Esophagus muscularis mucosa (tissue), 4 donors: ENCODE measurements at regions of chr11 and their contacts with region 1.

Region 1: GRCh38 chr11:59207988-59208451 is 4.7 kb downstream of the MPEG1 start:
- DNase-seq: no peak
- H3K4me3 ChIP-seq: peak overlapping the region in 2 of 4 donors; percentile 6 to 36
- H3K27ac ChIP-seq: peak overlapping the region in 1 of 4 donors; percentile 40
- H3K4me1 ChIP-seq: peaks cover 0 to 18% (median 7%) of the 10 kb centered on the region in 4 donors
- H3K27me3 ChIP-seq: no peaks in the 10 kb centered on the region
- CTCF ChIP-seq: peak; percentile 66 to 74 (median 72)
- EP300 ChIP-seq: no peak
- POLR2A ChIP-seq: no peak

Region 2: DNA sequence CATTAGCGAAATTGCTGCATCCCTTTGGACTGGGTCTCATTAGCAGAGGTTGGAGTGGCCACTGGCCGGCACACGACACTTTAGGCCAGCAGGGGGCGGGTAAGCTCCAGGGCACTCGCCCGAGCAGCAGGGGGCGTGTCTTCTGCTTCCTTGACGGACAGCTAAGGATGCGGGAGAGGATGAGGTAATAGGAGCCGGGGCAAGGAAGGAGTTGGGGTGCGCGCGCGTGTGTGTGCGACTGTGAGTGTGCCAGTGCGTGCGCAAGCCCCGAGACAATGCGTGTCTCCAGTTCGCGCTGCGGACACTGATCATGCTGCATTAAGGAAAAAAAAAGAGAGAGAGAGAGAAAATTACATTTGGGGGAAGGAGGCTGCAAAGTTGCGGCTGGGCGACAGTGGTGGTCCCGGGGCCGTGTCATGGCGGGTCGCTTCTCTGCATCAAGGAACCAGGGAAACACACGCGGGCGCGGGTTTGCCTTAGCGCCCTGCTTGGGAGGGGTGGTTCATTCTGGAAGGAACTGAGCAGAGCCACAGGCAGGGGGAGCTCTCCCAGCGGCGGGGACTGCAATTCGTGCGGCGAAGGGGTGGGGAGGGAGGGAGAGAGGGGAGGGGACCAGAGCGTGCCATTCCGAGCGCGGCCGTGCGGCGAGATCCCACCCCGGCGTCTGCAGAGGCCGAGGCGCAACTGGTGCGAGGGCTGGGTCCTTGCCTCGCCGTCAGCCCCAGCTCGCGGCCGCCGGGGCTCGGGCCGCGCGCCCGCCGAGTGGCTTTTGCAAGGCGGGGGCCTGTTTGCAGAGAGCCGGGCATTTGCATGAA is 36.3 kb before region 1 on chr11 and contains the start of gene DTX4:
- intact Hi-C with region 1: loop called (anchors 1 kb)
- DNase-seq: peak; percentile 97
- H3K4me3 ChIP-seq: peak within 1 kb of the TSS; percentile 64 to 87 (median 74)
- H3K27ac ChIP-seq: peak within 1 kb of the TSS; percentile 51 to 74 (median 70)
- H3K4me1 ChIP-seq: peaks cover 9 to 38% (median 25%) of the 10 kb centered on the region in 4 donors
- H3K27me3 ChIP-seq: peaks cover 0 to 10% (median 5%) of the 10 kb centered on the region in 4 donors
- CTCF ChIP-seq: peak; percentile 72 to 94 (median 88)
- EP300 ChIP-seq: no peak
- POLR2A ChIP-seq: no peak
- total RNA-seq, gene DTX4: 3.1 to 8.8 (median 4.5) TPM

Region 3: GRCh38 chr11:59283825-59284772 is 76.1 kb after region 1 on chr11:
- intact Hi-C with region 1: loop called (anchors 5 kb)
- DNase-seq: peak; percentile 91
- H3K4me3 ChIP-seq: no peak overlapping the region
- H3K27ac ChIP-seq: no peak overlapping the region
- H3K4me1 ChIP-seq: peaks cover 0 to 4% (median 0%) of the 10 kb centered on the region in 4 donors
- H3K27me3 ChIP-seq: peaks cover 0 to 11% (median 0%) of the 10 kb centered on the region in 4 donors
- CTCF ChIP-seq: peak; percentile 66 to 83 (median 74)
- EP300 ChIP-seq: no peak
- POLR2A ChIP-seq: no peak

Region 4: DNA sequence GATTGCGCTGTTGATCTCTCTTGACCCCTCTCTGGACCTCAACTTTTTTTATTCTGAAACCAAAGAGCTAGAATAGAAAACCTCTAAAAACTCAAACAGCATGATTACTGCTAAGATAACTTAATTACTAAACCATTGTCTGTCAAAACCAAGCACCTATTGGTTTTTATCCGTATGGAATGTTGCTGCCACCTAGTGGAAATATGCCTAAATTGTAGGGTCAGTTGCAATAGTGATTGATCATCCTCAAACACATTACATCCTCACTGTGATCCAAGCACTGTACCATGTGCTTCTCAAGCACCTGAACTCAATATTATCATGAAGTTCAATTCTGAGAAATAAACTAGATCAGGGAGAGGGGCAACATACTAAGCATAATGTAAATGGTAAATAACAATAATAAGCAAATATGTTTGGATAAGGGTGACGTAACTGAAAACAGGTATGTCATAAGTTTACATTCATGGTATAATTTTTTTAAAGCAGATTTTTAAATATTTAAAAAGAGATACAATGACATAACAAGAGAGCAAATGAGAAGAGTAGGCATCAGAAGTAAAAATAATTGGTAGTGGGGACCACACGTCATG is 222.0 kb after region 1 on chr11:
- intact Hi-C with region 1: loop called (anchors 10 kb)
- DNase-seq: no peak
- H3K4me3 ChIP-seq: no peak overlapping the region
- H3K27ac ChIP-seq: no peak overlapping the region
- H3K4me1 ChIP-seq: no peaks in the 10 kb centered on the region
- H3K27me3 ChIP-seq: no peaks in the 10 kb centered on the region
- CTCF ChIP-seq: peak; percentile 28 to 56 (median 35)
- EP300 ChIP-seq: no peak
- POLR2A ChIP-seq: no peak